ENCODE measurements at regions of chr11 and their contacts with region 1.

Region 1: DNA sequence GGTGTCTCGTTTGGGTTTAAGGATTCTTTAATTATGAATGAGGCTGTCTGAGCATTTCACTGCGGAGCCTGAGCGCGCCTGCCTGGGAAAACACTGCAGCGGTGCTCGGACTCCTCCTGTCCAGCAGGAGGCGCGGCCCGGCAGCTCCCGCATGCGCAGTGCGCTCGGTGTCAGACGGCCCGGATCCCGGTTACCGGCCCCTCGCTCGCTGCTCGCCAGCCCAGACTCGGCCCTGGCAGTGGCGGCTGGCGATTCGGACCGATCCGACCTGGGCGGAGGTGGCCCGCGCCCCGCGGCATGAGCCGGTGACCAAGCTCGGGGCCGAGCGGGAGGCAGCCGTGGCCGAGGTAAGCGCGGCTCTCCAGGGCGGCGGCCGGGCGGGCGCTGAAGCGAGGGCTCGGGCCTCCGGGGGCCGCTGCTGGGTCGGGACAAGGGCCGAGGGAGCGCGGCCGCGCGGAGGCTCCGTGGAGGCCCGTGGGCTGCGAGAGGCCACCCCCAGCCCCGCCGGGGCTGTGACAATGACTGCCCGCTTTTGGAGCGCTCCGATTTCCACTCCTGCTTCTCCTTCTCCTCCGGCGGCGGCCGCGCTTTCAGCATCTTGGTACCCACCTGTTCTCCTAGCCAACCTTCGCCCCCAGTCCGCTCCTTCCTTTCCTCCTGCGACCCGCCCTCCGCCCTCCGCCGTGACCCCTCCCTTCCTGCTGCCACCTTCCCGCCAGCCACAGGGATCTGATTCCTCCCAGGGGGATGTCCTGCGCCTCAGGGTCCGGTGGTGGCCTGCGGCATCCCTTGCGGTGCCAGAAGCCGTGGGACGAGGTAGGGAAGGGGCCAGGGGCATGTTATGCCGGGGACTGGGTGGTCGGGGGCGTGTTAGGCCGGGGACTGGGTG is at the start of gene EXT2:
- DNase-seq: peak; percentile 71 to 94 (median 86)
- H3K4me3 ChIP-seq: peak within 1 kb of the TSS; percentile 64 to 99 (median 87)
- H3K27ac ChIP-seq: peak within 1 kb of the TSS in 47 of 59 donors; percentile 5 to 87 (median 72)
- H3K27me3 ChIP-seq: no peaks in the 10 kb centered on the region
- CTCF ChIP-seq: peak; percentile 84 to 99 (median 96)
- total RNA-seq, gene EXT2: 37.7 to 64.1 (median 50.2) TPM

Region 2: GRCh38 chr11:44065841-44066731 is 29.7 kb before region 1 on chr11 and contains the start of gene ACCS:
- intact Hi-C with region 1: no loop called
- DNase-seq: peak; percentile 79 to 92 (median 90)
- H3K4me3 ChIP-seq: peak within 1 kb of the TSS; percentile 40 to 90 (median 79)
- H3K27ac ChIP-seq: peak within 1 kb of the TSS in 58 of 59 donors; percentile 24 to 95 (median 84)
- H3K27me3 ChIP-seq: no peaks in the 10 kb centered on the region
- CTCF ChIP-seq: peak; percentile 49 to 90 (median 78)
- total RNA-seq, gene ACCS: 5.0 to 38.8 (median 17.8) TPM

Region 3: DNA sequence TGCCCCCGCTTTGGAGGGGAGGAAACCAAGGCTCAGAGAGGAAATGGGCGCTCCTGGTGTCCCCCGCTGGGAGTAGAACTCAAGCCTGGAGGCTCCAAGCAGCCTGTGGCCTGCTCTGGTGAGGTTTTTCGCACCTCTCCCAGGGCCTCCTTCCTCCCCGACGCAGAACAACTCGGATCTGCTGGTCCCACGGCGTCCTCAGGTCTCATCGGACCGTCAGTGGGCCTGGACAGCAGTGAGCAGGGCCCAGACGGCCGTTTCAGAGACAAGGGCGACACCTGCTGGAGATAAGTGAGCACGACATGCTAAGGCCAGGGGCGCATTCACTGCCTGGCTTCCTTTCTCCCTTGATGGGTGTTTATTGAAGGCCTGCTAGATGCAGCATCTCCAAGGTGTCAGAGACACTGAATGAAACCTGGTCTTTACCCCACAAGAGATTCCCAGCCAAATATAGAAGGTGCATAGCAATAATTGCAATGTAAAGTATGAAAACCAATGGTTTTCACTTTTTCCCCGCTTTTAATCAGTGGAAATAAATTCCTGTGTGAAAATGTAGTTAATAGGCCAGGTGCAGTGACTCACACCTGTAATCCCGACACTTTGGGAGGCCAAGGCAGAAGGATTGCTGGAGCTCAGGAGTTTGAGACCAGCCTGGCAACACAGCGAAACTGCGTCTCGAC is 442.8 kb after region 1 on chr11:
- intact Hi-C with region 1: loop called (anchors 2 to 5 kb)
- DNase-seq: peak; percentile 65 to 88 (median 78)
- H3K4me3 ChIP-seq: peak overlapping the region in 3 of 59 donors; percentile 17 to 19 (median 19)
- H3K27ac ChIP-seq: no peak overlapping the region
- H3K27me3 ChIP-seq: peaks cover 0 to 2% (median 0%) of the 10 kb centered on the region in 45 donors
- CTCF ChIP-seq: peak; percentile 80 to 100 (median 96)

Region 4: GRCh38 chr11:44611687-44612434 is 516.1 kb after region 1 on chr11:
- intact Hi-C with region 1: loop called in 1 of 2 experiments (anchors 10 kb)
- DNase-seq: no peak
- H3K4me3 ChIP-seq: no peak overlapping the region
- H3K27ac ChIP-seq: peak overlapping the region in 53 of 59 donors; percentile 1 to 91 (median 68)
- H3K27me3 ChIP-seq: no peaks in the 10 kb centered on the region
- CTCF ChIP-seq: no peak

Measured in dorsolateral prefrontal cortex (tissue), 120 donors.